ENCODE measurements at regions of chr1 and their contacts with region 1.

Region 1: DNA sequence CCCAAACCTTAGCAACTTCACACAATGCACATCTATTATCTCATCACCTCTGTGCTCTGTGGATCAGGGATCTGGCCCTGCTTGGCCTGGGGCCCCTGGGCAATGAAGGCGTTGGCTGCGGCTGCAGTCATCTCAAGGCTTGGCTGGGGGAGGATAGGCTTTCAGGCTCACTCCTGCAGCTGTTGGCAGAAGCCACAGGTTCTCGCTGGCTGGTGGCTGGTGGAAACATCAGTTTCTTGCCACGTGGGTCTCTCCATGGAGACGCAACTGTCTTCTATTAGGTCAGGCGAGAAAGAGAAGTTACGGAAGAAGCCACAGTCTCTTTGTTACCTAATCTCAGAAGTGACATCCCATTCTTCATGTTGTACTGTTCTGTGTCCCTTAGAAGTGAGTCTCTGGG is 3.6 kb upstream of the NPPA start:
- DNase-seq: no peak
- H3K4me3 Mint-ChIP-seq: no peak overlapping the region
- H3K27ac Mint-ChIP-seq: no peak overlapping the region
- H3K4me1 Mint-ChIP-seq: no peaks in the 10 kb centered on the region
- H3K27me3 Mint-ChIP-seq: peaks cover 35% of the 10 kb centered on the region
- CTCF ChIP-seq: no peak

Region 2: DNA sequence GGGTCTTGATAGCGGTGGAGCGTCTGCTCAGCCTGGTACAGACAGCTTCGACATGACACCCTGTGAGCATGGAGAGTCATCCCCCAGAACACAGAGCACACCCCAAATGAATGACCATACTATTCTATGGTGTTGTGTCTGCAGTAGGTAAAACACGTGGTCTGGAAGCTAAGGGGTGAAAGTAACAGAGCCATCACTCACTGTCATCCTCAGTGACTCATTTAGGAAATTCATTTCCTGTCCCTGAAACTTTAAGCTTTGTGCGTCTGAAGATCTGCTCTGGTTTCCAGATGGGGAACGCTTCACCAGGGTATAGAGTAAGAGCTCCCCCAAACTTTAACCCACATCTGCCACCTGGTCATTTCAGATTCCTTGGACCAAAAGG is 467.0 kb before region 1 on chr1:
- CTCF ChIA-PET with region 1: no interaction called
- intact Hi-C with region 1: no loop called
- DNase-seq: no peak
- H3K4me3 Mint-ChIP-seq: no peak overlapping the region
- H3K27ac Mint-ChIP-seq: no peak overlapping the region
- H3K4me1 Mint-ChIP-seq: no peaks in the 10 kb centered on the region
- H3K27me3 Mint-ChIP-seq: peaks cover 93% of the 10 kb centered on the region
- CTCF ChIP-seq: no peak

Region 3: GRCh38 chr1:11893907-11894251 is 42.7 kb after region 1 on chr1:
- CTCF ChIA-PET with region 1: interaction called, 4 read pairs
- intact Hi-C with region 1: loop called (anchors 5 kb)
- DNase-seq: peak; percentile 79
- H3K4me3 Mint-ChIP-seq: no peak overlapping the region
- H3K27ac Mint-ChIP-seq: no peak overlapping the region
- H3K4me1 Mint-ChIP-seq: no peaks in the 10 kb centered on the region
- H3K27me3 Mint-ChIP-seq: peaks cover 55% of the 10 kb centered on the region
- CTCF ChIP-seq: peak; percentile 80

Region 4: DNA sequence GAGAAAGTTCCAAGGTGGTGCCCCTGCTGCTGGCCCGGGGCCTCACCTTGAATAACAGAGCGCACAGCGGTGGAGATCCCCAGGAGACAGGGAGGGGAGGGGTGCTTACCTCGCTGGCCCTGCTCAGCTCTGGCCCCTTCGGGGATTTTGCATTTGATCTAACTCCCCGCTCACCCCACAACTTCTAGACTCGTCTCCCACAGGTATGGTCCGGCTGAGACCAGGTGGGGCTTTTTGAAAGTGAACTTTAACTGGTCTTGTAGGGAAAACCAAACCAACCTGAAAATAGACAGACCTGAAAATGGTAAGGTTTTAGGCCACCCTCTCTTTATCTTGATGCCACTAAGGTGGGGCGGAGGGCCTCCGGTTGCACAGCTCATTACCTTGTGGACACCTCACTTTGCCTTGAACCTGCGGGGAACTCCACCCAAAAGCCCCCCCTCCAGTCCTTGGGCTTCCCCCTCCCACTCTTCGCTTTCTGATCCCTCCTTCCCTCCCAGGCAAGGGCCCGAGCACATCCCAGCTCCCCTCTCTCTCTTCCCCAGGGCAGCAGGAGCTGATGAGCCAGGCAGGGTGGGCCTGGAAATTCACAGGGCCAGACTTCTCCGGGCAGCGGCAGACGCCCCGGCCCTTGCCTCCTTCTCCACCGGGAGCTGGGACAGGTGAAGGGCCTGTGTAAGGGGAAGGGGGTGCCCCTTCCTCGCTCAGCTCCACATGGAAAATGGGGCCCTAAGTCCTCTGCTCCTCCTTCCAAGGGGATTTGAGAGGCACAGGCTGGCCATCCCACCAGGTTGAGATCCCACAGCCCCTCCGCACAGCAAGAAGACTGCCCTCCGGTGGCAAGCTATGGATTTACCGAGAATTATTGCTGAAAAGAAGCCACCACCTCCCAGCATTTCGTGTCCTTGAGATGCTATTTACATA is 228.0 kb after region 1 on chr1:
- CTCF ChIA-PET with region 1: no interaction called
- intact Hi-C with region 1: no loop called
- DNase-seq: peak; percentile 32
- H3K4me3 Mint-ChIP-seq: no peak overlapping the region
- H3K27ac Mint-ChIP-seq: no peak overlapping the region
- H3K4me1 Mint-ChIP-seq: no peaks in the 10 kb centered on the region
- H3K27me3 Mint-ChIP-seq: peaks cover 70% of the 10 kb centered on the region
- CTCF ChIP-seq: no peak

Measured in Calu3 (cell line).